Activated CD8-positive, alpha-beta memory T cell treated with anti-CD3 and anti-CD28 coated beads, Interleukin-2, amount 10 ng/mL, durations not matched to agents 7 days and 5 days (primary cell): ENCODE measurements at regions of chr2 and their contacts with region 1.

Region 1: DNA sequence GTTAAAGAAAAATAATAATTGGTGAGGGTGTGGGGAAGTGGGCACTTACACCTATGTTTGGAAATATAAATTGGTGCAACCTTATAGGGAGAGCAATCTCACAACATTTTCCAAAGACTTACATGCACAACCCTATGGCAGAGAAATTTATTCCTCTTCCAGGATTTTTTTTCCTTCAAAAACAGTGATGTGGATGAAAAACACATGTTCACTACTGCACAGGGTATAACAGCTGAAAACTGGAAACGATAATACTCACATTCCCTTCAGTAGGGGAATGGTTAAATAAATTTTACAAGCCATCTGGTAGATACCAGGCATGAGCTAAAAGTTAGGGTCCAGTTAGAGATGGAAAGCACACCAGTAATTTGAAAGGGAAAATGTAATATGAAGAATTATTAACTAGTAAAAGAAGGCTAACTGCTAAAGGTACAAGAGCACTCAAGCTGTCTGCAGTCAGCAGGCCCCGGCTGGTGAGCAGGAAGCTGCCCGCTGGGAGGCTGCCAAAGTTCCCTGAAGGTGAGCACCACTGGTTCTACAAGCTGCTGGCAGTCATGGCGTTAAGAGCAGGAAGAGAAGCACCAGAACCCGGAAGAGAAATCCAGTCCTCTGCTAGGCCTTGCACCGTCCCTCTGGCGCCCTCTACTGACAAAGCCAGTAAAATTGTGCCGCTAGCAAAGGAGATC is 28.4 kb upstream of the CASP8 start:
- DNase-seq: peak; percentile 96
- ATAC-seq: peak; percentile 58
- H3K4me3 Mint-ChIP-seq: peak overlapping the region; percentile 96
- H3K27ac Mint-ChIP-seq: peak overlapping the region; percentile 86
- H3K4me1 Mint-ChIP-seq: peaks cover 50% of the 10 kb centered on the region
- H3K27me3 Mint-ChIP-seq: no peaks in the 10 kb centered on the region

Region 2: DNA sequence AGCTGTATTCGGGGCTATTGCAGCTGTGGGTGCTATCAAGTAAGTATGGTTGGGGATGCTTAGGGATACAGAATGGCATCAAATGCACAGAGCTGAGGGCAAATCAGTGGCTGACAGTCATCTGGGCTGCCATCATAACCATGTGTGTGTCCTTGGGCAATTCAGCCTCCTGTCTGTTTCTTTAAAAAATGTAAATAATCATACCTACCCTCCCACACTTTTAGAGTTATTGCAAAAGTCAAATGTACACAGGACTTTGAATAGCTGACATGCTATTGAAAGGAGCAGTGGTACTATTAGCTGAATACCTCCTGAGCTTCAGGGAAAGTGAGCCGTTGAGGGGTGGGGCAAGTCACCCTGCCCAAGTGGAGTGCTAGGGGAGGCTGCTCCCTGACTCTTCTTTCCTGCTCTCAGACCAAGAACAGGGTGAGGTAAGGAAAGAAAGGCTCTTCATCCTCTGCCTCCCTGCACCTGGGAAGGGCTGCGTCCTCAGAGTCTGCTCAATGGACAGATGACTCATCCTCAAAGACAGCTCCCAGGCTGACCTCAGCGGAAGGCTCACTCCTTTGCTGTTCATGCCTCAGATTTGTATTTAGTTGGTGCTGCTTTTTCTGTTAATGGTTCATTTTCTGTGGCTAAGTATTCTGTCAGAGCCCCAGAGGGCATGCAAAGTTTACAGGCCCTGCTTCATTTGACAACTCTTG is 475.2 kb before region 1 on chr2:
- CTCF ChIA-PET with region 1: no interaction called
- DNase-seq: no peak
- ATAC-seq: no peak
- H3K4me3 Mint-ChIP-seq: no peak overlapping the region
- H3K27ac Mint-ChIP-seq: no peak overlapping the region
- H3K4me1 Mint-ChIP-seq: no peaks in the 10 kb centered on the region
- H3K27me3 Mint-ChIP-seq: peaks cover 40% of the 10 kb centered on the region

Region 3: GRCh38 chr2:200901459-200902072 is 330.4 kb before region 1 on chr2:
- CTCF ChIA-PET with region 1: interaction called, 19 read pairs
- DNase-seq: peak; percentile 89
- ATAC-seq: peak; percentile 100
- H3K4me3 Mint-ChIP-seq: no peak overlapping the region
- H3K27ac Mint-ChIP-seq: peak overlapping the region; percentile 72
- H3K4me1 Mint-ChIP-seq: peaks cover 25% of the 10 kb centered on the region
- H3K27me3 Mint-ChIP-seq: no peaks in the 10 kb centered on the region

Region 4: GRCh38 chr2:200985799-200986198 is 246.1 kb before region 1 on chr2:
- CTCF ChIA-PET with region 1: no interaction called
- DNase-seq: no peak
- ATAC-seq: no peak
- H3K4me3 Mint-ChIP-seq: no peak overlapping the region
- H3K27ac Mint-ChIP-seq: no peak overlapping the region
- H3K4me1 Mint-ChIP-seq: no peaks in the 10 kb centered on the region
- H3K27me3 Mint-ChIP-seq: no peaks in the 10 kb centered on the region

Region 5: GRCh38 chr2:201100497-201100896 is 131.4 kb before region 1 on chr2:
- CTCF ChIA-PET with region 1: no interaction called
- DNase-seq: no peak
- ATAC-seq: no peak
- H3K4me3 Mint-ChIP-seq: no peak overlapping the region
- H3K27ac Mint-ChIP-seq: no peak overlapping the region
- H3K4me1 Mint-ChIP-seq: peaks cover 1% of the 10 kb centered on the region
- H3K27me3 Mint-ChIP-seq: no peaks in the 10 kb centered on the region

Region 6: GRCh38 chr2:201118121-201118960 is 113.6 kb before region 1 on chr2:
- CTCF ChIA-PET with region 1: interaction called, 29 read pairs
- DNase-seq: peak; percentile 95
- ATAC-seq: peak; percentile 29
- H3K4me3 Mint-ChIP-seq: peak overlapping the region; percentile 95
- H3K27ac Mint-ChIP-seq: peak overlapping the region; percentile 90
- H3K4me1 Mint-ChIP-seq: peaks cover 50% of the 10 kb centered on the region
- H3K27me3 Mint-ChIP-seq: peaks cover 2% of the 10 kb centered on the region

Region 7: DNA sequence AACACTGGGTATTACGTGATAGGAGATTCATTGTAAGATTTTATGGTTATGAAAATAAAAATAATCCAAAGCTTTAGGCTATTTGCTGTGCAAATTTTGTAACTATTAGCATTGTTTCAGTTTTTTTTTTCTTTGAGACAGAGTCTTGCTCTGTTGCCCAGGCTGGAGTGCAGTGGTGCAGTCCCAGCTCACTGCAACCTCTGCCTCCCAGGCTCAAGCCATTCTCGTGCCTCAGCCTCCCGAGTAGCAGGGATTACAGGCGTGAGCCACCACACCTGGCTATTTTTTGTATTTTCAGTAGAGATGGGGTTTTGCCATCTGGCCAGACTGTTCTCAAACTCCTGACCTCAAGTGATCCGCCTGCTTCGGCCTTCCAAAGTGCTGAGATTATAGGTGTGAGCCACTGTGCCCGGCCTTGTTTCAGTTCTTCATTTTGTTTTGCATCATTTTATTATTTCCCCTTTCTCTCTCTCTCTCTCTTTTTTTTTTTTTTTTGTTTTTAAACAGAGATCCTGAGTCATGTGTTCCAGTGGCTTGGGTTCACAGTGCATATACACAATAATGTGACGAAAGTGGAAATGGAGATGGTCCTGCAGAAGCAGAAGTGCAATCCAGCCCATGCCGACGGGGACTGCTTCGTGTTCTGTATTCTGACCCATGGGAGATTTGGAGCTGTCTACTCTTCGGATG is 23.2 kb before region 1 on chr2:
- CTCF ChIA-PET with region 1: interaction called, 17 read pairs
- DNase-seq: no peak
- ATAC-seq: no peak
- H3K4me3 Mint-ChIP-seq: no peak overlapping the region
- H3K27ac Mint-ChIP-seq: no peak overlapping the region
- H3K4me1 Mint-ChIP-seq: peaks cover 6% of the 10 kb centered on the region
- H3K27me3 Mint-ChIP-seq: no peaks in the 10 kb centered on the region

Region 8: GRCh38 chr2:201250741-201251140 is 18.8 kb after region 1 on chr2:
- CTCF ChIA-PET with region 1: interaction called, 28 read pairs
- DNase-seq: no peak
- ATAC-seq: no peak
- H3K4me3 Mint-ChIP-seq: no peak overlapping the region
- H3K27ac Mint-ChIP-seq: peak overlapping the region; percentile 42
- H3K4me1 Mint-ChIP-seq: peaks cover 67% of the 10 kb centered on the region
- H3K27me3 Mint-ChIP-seq: no peaks in the 10 kb centered on the region

Region 9: DNA sequence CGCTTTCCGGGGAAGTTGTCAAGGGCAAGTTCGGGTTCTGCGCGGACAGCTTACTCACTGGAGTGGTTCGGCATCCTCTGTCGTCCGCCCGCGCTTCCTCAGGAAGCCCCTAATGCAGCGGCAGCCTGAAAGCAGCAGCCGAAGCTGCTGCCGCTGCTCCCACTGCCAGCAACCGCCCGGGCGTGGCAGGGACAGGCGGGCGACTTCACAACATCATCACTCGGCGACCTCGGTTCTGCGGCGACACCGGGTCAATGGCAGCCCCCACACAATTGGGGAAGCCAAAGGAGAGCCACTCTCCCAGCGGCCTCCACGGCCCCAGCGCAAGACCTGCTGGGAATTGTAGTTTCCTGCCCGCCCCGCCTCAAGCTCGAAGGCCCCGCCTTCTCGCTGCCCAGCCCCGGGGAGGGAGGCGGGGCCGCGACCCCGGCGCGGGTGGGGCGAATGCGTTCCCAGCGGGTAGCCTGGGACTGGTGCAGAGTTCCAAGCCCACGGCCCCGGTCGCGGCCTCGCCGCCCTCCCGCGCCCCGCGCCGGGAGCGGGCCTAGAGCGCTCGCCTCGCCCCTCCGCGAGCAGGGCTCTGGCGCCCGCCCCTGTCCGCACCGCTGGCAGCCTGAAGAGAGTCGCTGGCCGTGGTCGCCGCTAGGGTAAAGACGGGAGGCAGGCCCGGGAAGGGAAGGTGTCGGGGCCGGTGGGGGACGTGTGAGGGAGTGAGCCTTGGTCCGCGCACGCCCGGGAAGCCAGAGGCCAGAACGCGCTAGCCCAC is 219.6 kb after region 1 on chr2 and contains the starts of genes STRADB and TRAK2:
- CTCF ChIA-PET with region 1: interaction called, 12 read pairs
- DNase-seq: peak; percentile 99
- ATAC-seq: peak; percentile 89
- H3K4me3 Mint-ChIP-seq: peak within 1 kb of the TSS; percentile 99
- H3K27ac Mint-ChIP-seq: peak within 1 kb of the TSS; percentile 98
- H3K4me1 Mint-ChIP-seq: peaks cover 48% of the 10 kb centered on the region
- H3K27me3 Mint-ChIP-seq: no peaks in the 10 kb centered on the region
- total RNA-seq, gene STRADB: 17.0 to 19.2 TPM
- total RNA-seq, gene TRAK2: 39.8 to 42.7 TPM